Activated naive CD4-positive, alpha-beta T cell treated with anti-CD3 and anti-CD28 coated beads for 36 hours (primary cell): ENCODE measurements at regions of chr10 and their contacts with region 1.

Region 1: GRCh38 chr10:128125944-128126764 is at the start of gene MKI67:
- DNase-seq: peak; percentile 95
- H3K4me3 Mint-ChIP-seq: peak within 1 kb of the TSS; percentile 95
- H3K27ac Mint-ChIP-seq: peak within 1 kb of the TSS; percentile 85
- H3K4me1 Mint-ChIP-seq: peaks cover 23% of the 10 kb centered on the region
- H3K27me3 Mint-ChIP-seq: peaks cover 27% of the 10 kb centered on the region
- total RNA-seq, gene MKI67: 266 to 273 TPM

Region 2: GRCh38 chr10:128047351-128047750 is 78.8 kb before region 1 on chr10:
- CTCF ChIA-PET with region 1: no interaction called
- intact Hi-C with region 1: loop called (anchors 1 kb)
- DNase-seq: peak; percentile 92
- H3K4me3 Mint-ChIP-seq: peak overlapping the region; percentile 84
- H3K27ac Mint-ChIP-seq: peak overlapping the region; percentile 95
- H3K4me1 Mint-ChIP-seq: peaks cover 44% of the 10 kb centered on the region
- H3K27me3 Mint-ChIP-seq: no peaks in the 10 kb centered on the region

Region 3: DNA sequence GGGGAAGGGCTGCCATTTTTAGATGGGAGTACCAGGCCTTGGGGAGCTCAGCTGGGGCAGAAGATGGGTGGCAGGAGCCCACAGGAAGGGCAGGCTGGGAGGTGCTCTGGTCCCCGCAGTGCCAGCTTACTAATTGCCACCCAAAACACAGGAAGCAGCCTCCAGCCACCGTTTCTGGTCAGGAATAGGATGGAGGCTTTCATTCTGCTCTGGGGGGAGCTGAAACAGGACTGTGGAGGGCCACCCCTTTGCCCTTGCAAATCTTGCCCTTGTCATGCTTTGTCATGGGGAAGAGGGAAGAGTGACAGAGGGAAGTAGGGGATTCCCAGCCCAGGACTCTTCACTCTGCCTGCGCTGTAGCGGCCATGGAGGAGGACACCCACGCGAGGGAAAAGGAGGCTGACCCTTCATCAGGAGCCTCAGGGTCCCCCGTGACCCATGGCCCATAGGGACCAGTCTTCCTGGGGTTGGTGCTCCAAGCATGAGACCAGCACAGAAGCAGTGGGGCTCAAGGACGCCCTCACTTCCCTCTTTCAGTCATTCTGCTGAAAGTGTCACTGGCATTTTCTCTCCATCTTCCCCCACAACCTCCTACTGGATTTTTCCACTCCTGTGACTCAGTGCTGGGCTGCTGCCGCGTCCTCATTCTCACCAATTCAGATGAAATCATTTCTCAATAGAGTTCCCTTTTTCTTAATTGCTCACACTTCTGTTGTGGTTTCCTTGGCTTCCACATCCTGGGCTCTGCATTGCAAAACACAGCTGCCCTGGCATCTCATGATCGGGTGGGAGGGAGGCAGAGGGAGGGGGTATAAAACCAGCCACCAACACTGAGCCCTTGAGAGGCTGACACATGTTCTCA is 61.8 kb before region 1 on chr10:
- CTCF ChIA-PET with region 1: interaction called, 6 read pairs
- intact Hi-C with region 1: loop called (anchors 1 kb)
- DNase-seq: peak; percentile 89
- H3K4me3 Mint-ChIP-seq: peak overlapping the region; percentile 26
- H3K27ac Mint-ChIP-seq: peak overlapping the region; percentile 93
- H3K4me1 Mint-ChIP-seq: peaks cover 58% of the 10 kb centered on the region
- H3K27me3 Mint-ChIP-seq: no peaks in the 10 kb centered on the region

Region 4: DNA sequence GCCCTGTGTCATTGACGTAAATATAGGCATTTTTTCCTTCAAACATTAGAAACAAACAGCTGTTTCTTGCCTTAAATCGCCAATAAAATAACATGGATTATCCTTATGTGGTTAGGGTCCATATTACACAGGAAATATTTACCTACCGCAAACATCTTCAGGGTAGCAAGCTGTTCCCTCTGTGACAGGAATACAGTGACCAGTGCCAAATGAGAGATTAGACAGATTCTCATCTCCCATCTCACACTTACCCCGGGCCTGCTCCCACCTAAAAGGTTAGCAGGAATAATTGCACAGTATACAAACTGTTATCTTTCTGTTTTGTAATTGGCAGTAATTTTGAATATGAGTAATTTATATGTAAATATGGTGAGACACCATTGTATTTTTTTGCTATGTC is 16.4 kb before region 1 on chr10:
- CTCF ChIA-PET with region 1: no interaction called
- intact Hi-C with region 1: loop called (anchors 2 kb)
- DNase-seq: no peak
- H3K4me3 Mint-ChIP-seq: no peak overlapping the region
- H3K27ac Mint-ChIP-seq: no peak overlapping the region
- H3K4me1 Mint-ChIP-seq: peaks cover 2% of the 10 kb centered on the region
- H3K27me3 Mint-ChIP-seq: no peaks in the 10 kb centered on the region

Region 5: DNA sequence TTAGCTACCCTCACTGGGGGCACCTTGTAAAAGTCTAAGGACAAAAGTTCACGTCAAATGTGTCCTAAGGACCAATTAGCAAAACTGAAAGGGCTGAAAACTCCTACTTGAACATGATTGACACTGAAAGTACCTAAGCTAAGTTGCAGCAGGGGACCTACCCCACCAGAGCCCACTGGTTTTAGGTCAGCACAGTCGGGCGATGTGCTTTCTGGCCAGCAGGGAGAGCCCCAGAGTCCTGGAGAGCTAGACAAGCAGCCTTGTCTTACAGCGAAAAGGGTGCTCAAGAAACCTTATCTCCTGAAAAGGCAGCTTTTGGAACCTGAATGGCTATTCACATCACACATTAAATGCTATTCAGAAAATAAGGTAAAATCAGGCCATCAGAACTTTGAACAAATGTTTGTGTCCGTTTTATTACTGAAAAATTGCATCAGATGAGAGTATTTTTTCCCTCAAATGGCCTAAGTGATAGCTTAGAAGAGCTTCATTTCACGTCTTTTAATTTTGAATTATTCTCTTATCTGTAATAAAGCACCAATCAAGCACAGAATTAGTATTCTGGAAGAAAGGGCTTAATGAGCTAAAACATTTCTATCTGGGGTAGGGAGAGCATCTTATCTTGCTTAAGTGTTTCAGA is 52.3 kb after region 1 on chr10:
- CTCF ChIA-PET with region 1: no interaction called
- intact Hi-C with region 1: loop called (anchors 1 kb)
- DNase-seq: peak; percentile 64
- H3K4me3 Mint-ChIP-seq: no peak overlapping the region
- H3K27ac Mint-ChIP-seq: no peak overlapping the region
- H3K4me1 Mint-ChIP-seq: peaks cover 20% of the 10 kb centered on the region
- H3K27me3 Mint-ChIP-seq: no peaks in the 10 kb centered on the region

Region 6: DNA sequence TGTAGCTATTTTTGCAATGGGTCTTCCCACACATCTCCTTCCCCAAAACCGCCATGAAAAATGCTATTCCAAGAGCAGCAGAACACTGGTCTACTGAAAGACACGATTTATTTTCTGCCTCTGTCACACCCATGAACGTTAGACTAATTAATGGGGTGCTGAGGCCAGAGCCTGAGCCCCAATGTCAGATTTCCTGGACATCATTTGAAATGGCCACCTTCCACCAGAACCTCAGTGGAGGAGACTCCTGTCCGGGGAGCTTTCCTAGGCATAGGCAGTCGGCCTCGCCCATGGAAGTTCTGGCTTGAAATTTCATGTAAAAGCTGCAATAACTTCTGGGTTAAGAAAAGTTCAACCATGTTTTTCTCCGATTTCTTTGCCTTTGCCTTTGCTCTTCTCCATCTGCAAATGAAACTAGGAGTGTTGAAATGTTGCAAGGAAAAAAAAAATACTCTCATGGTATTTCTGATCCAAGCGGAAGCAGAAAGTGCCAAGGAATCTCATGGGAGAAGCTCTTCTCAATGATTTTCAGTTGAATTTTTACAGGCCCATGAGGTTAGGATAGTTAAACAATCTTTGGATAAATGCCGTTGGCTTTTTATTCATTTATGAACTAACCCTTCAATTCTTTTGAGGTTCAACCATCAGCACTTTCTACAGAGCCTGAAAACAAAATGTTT is 770.1 kb after region 1 on chr10:
- CTCF ChIA-PET with region 1: no interaction called
- intact Hi-C with region 1: no loop called
- DNase-seq: no peak
- H3K4me3 Mint-ChIP-seq: no peak overlapping the region
- H3K27ac Mint-ChIP-seq: no peak overlapping the region
- H3K4me1 Mint-ChIP-seq: no peaks in the 10 kb centered on the region
- H3K27me3 Mint-ChIP-seq: peaks cover 2% of the 10 kb centered on the region